CD8-positive, alpha-beta T cell (primary cell): ENCODE measurements at regions of chr5 and their contacts with region 1.

Region 1: DNA sequence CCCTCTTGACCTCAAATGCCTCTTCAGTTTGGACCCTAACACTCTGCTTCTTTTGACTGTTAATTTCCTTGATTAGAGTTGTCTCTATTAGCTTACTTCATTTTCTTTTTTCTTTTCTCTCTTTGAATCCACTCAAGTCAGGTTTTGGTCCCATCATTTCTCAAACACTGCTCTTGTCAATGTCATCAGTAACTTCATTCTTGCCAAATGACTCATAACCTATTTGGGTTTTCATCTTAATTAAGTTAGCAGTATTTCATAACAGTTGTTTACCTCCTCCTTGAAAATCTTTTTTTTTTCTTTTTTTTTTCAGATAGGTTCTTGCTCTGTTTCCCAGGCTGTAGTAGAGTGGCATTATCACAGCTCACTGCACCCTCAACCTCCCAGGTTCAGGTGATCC is 119.6 kb downstream of the PARP8 start:
- DNase-seq: no peak
- ATAC-seq: no peak
- H3K4me3 ChIP-seq: no peak overlapping the region
- H3K4me3 Mint-ChIP-seq: no peak overlapping the region
- H3K27ac ChIP-seq: no peak overlapping the region
- H3K27ac Mint-ChIP-seq: peak overlapping the region; percentile 85
- H3K4me1 ChIP-seq: no peaks in the 10 kb centered on the region
- H3K4me1 Mint-ChIP-seq: peaks cover 41% of the 10 kb centered on the region
- H3K27me3 ChIP-seq: no peaks in the 10 kb centered on the region
- H3K27me3 Mint-ChIP-seq: no peaks in the 10 kb centered on the region
- CTCF ChIP-seq: no peak

Region 2: DNA sequence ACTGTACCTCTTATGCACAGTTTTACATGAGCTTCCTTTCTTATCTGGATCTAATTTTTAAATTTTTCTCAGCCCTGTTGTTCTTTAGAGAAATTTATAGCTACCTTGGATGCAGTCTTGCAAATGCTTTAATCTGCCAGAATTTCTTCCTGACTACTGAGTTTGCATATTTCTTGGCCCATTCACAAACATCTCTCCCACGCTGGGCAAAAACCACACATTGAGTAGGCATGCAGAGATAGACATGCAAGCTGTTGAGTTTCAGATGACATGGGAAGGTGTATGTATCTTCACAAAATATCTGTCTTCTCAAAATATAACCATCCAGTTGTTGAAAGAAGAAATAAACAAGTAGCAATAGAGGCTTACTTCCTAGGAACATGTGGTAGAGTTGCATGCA is 18.5 kb before region 1 on chr5:
- CTCF ChIA-PET with region 1: interaction called, 3 read pairs
- POLR2A ChIA-PET with region 1: no interaction called
- intact Hi-C with region 1: loop called in 1 of 2 experiments (anchors 2 kb)
- DNase-seq: no peak
- ATAC-seq: no peak
- H3K4me3 ChIP-seq: no peak overlapping the region
- H3K4me3 Mint-ChIP-seq: no peak overlapping the region
- H3K27ac ChIP-seq: no peak overlapping the region
- H3K27ac Mint-ChIP-seq: peak overlapping the region; percentile 33
- H3K4me1 ChIP-seq: no peaks in the 10 kb centered on the region
- H3K4me1 Mint-ChIP-seq: peaks cover 52% of the 10 kb centered on the region
- H3K27me3 ChIP-seq: no peaks in the 10 kb centered on the region
- H3K27me3 Mint-ChIP-seq: no peaks in the 10 kb centered on the region
- CTCF ChIP-seq: no peak